ENCODE measurements at regions of chr15 and their contacts with region 1.

Region 1: DNA sequence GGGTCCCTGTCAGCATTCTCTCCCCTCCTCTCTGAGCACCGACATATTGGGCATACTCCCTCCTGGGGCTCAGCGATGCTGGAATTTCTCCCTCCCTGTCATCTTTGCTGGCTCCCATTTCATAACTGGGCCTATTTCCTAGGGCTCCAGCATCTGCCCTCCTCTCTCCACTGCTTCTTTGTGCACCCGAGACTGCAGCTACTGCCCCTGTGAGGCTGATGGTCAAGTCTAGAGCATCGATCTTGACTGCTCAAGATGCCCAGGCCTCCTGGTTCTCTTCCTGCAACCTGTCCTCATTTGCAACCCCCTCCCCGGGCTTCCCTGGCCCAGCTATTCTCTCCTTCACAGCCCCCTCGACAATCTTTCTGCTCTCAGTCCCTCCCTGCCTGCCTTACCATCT is 53.5 kb downstream of the WHAMM start:
- DNase-seq: peak in 1 of 9 experiments; percentile 15
- ATAC-seq: no peak
- H3K4me3 ChIP-seq: no peak overlapping the region
- H3K4me3 Mint-ChIP-seq: no peak overlapping the region
- H3K27ac ChIP-seq: no peak overlapping the region
- H3K27ac Mint-ChIP-seq: no peak overlapping the region
- H3K4me1 ChIP-seq: no peaks in the 10 kb centered on the region
- H3K4me1 Mint-ChIP-seq: no peaks in the 10 kb centered on the region
- H3K27me3 ChIP-seq: no peaks in the 10 kb centered on the region
- H3K27me3 Mint-ChIP-seq: no peaks in the 10 kb centered on the region
- CTCF ChIP-seq: no peak

Region 2: GRCh38 chr15:82809404-82810060 is 53.4 kb before region 1 on chr15 and contains the start of gene WHAMM:
- CTCF ChIA-PET with region 1: no interaction called
- POLR2A ChIA-PET with region 1: no interaction called
- intact Hi-C with region 1: no loop called
- DNase-seq: peak; percentile 89 to 98 (median 94)
- ATAC-seq: peak; percentile 93
- H3K4me3 ChIP-seq: peak within 1 kb of the TSS; percentile 67 to 69
- H3K4me3 Mint-ChIP-seq: peak within 1 kb of the TSS; percentile 92
- H3K27ac ChIP-seq: peak within 1 kb of the TSS; percentile 93 to 97
- H3K27ac Mint-ChIP-seq: peak within 1 kb of the TSS; percentile 97
- H3K4me1 ChIP-seq: peaks cover 26% of the 10 kb centered on the region
- H3K4me1 Mint-ChIP-seq: peaks cover 32% of the 10 kb centered on the region
- H3K27me3 ChIP-seq: no peaks in the 10 kb centered on the region
- H3K27me3 Mint-ChIP-seq: no peaks in the 10 kb centered on the region
- CTCF ChIP-seq: no peak
- total RNA-seq, gene WHAMM: 123 to 124 TPM

Region 3: GRCh38 chr15:82882273-82882928 is 19.5 kb after region 1 on chr15:
- CTCF ChIA-PET with region 1: no interaction called
- POLR2A ChIA-PET with region 1: no interaction called
- intact Hi-C with region 1: no loop called
- DNase-seq: no peak
- ATAC-seq: no peak
- H3K4me3 ChIP-seq: no peak overlapping the region
- H3K4me3 Mint-ChIP-seq: no peak overlapping the region
- H3K27ac ChIP-seq: no peak overlapping the region
- H3K27ac Mint-ChIP-seq: no peak overlapping the region
- H3K4me1 ChIP-seq: no peaks in the 10 kb centered on the region
- H3K4me1 Mint-ChIP-seq: no peaks in the 10 kb centered on the region
- H3K27me3 ChIP-seq: no peaks in the 10 kb centered on the region
- H3K27me3 Mint-ChIP-seq: no peaks in the 10 kb centered on the region
- CTCF ChIP-seq: no peak

Region 4: GRCh38 chr15:82919231-82919886 is 56.5 kb after region 1 on chr15:
- CTCF ChIA-PET with region 1: no interaction called
- POLR2A ChIA-PET with region 1: no interaction called
- intact Hi-C with region 1: no loop called
- DNase-seq: no peak
- ATAC-seq: no peak
- H3K4me3 ChIP-seq: no peak overlapping the region
- H3K4me3 Mint-ChIP-seq: no peak overlapping the region
- H3K27ac ChIP-seq: no peak overlapping the region
- H3K27ac Mint-ChIP-seq: no peak overlapping the region
- H3K4me1 ChIP-seq: no peaks in the 10 kb centered on the region
- H3K4me1 Mint-ChIP-seq: no peaks in the 10 kb centered on the region
- H3K27me3 ChIP-seq: no peaks in the 10 kb centered on the region
- H3K27me3 Mint-ChIP-seq: no peaks in the 10 kb centered on the region
- CTCF ChIP-seq: no peak

Region 5: DNA sequence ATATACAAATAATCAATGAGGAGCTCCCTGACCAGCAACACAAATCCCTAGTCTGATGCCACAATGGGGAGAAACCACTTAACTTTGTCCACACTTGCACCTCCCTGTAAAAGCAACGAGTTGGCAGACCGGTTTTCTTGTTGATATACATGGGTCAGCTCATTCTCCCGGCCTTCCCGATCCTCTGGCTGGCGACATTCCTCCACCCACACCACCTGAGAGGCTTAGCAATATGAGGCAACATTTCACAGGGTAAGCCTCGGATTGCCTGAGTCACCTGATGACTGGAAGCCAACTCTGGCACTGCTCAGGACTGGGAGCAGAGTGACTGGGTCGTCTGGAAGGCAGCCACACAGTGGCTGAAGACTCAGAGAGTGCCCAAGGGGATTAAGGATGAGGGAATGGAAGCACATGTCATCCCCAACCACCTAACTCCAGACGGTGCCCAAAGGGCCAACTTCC is 79.8 kb after region 1 on chr15:
- CTCF ChIA-PET with region 1: no interaction called
- POLR2A ChIA-PET with region 1: no interaction called
- intact Hi-C with region 1: loop called in 1 of 2 experiments (anchors 10 kb)
- DNase-seq: no peak
- ATAC-seq: no peak
- H3K4me3 ChIP-seq: no peak overlapping the region
- H3K4me3 Mint-ChIP-seq: no peak overlapping the region
- H3K27ac ChIP-seq: no peak overlapping the region
- H3K27ac Mint-ChIP-seq: no peak overlapping the region
- H3K4me1 ChIP-seq: no peaks in the 10 kb centered on the region
- H3K4me1 Mint-ChIP-seq: no peaks in the 10 kb centered on the region
- H3K27me3 ChIP-seq: no peaks in the 10 kb centered on the region
- H3K27me3 Mint-ChIP-seq: peaks cover 14% of the 10 kb centered on the region
- CTCF ChIP-seq: no peak